Kidney (tissue), 22 donors: ENCODE measurements at regions of chr2 and their contacts with region 1.

Region 1: DNA sequence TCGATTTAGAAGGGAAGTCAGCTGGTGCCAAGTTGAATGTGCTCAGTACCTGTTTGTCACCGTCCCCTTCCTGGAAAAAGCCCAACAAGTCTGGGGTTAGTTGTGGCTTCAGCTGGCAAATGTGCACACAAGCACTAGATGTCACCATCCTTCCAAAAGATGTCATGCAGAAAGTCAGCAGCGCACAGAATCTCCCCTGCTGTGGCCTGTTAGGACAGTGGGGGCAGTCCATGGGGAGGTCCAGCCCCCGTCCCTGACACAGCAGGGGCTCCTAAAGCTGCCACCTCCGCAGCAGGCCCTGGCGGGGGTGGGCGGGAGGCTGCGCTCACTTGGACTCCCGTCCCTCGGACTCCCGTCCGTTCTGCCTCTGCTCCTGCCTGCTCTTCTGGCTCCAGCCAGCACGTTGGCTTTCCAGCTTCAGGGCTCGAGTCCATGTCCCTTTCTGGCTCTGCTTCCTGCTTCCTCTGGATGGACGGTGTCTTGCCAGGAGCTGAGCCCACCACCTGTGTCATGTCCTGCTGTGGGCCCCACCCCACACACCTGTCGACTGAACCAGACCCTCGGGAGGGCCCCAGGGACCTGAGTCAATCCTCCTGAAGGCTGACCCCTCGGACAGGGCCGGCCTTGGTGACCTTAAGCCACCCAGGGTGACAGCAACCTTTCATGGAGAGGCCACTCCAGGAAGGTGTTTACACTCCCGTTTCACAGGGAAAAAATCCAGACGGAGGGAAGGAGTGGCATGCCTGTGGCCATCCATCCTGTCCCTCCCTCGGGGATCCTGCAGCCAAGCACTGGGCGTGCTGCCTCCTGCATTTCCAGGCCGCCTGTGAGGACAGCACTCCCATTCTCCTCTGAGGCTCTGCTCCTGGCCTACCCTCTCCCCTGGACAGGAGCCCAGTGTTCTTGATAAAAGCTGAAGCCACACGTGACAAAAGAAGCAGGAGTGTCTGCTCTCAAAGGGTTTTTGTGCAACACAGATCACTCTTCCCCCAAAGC is 8.5 kb downstream of the RAB17 start:
- DNase-seq: peak; percentile 77 to 89 (median 80)
- H3K4me3 ChIP-seq: no peak overlapping the region
- H3K27ac ChIP-seq: peak overlapping the region; percentile 48 to 62
- H3K4me1 ChIP-seq: peaks cover 0 to 16% (median 7%) of the 10 kb centered on the region in 3 donors
- H3K27me3 ChIP-seq: no peaks in the 10 kb centered on the region
- CTCF ChIP-seq: peak; percentile 80

Region 2: GRCh38 chr2:237744613-237745249 is 162.7 kb after region 1 on chr2:
- intact Hi-C with region 1: loop called (anchors 10 kb)
- DNase-seq: peak; percentile 82 to 89 (median 85)
- H3K4me3 ChIP-seq: no peak overlapping the region
- H3K27ac ChIP-seq: peak overlapping the region in 1 of 2 donors; percentile 10
- H3K4me1 ChIP-seq: peaks cover 0 to 4% (median 0%) of the 10 kb centered on the region in 3 donors
- H3K27me3 ChIP-seq: no peaks in the 10 kb centered on the region
- CTCF ChIP-seq: peak; percentile 95